ENCODE measurements at regions of chr1 and their contacts with region 1.

Region 1: GRCh38 chr1:234188454-234188792 is 184.8 kb upstream of the COA6 start:
- DNase-seq: peak; percentile 98
- H3K4me3 ChIP-seq: no peak overlapping the region
- H3K27ac ChIP-seq: peak overlapping the region; percentile 75
- H3K4me1 ChIP-seq: peaks cover 38% of the 10 kb centered on the region
- H3K27me3 ChIP-seq: no peaks in the 10 kb centered on the region
- CTCF ChIP-seq: peak; percentile 35 to 48

Region 2: GRCh38 chr1:234125283-234125682 is 63.1 kb before region 1 on chr1:
- CTCF ChIA-PET with region 1: no interaction called
- dilution Hi-C with region 1: no loop called
- in situ Hi-C with region 1: no loop called
- intact Hi-C with region 1: loop called (anchors 2 kb)
- DNase-seq: peak; percentile 55
- H3K4me3 ChIP-seq: no peak overlapping the region
- H3K27ac ChIP-seq: no peak overlapping the region
- H3K4me1 ChIP-seq: peaks cover 7% of the 10 kb centered on the region
- H3K27me3 ChIP-seq: no peaks in the 10 kb centered on the region
- CTCF ChIP-seq: peak; percentile 66 to 79

Region 3: GRCh38 chr1:234154320-234155251 is 33.8 kb before region 1 on chr1:
- CTCF ChIA-PET with region 1: no interaction called
- dilution Hi-C with region 1: no loop called
- in situ Hi-C with region 1: no loop called
- intact Hi-C with region 1: loop called (anchors 1 kb)
- DNase-seq: peak; percentile 73
- H3K4me3 ChIP-seq: no peak overlapping the region
- H3K27ac ChIP-seq: no peak overlapping the region
- H3K4me1 ChIP-seq: peaks cover 3% of the 10 kb centered on the region
- H3K27me3 ChIP-seq: no peaks in the 10 kb centered on the region
- CTCF ChIP-seq: peak; percentile 73 to 80

Region 4: DNA sequence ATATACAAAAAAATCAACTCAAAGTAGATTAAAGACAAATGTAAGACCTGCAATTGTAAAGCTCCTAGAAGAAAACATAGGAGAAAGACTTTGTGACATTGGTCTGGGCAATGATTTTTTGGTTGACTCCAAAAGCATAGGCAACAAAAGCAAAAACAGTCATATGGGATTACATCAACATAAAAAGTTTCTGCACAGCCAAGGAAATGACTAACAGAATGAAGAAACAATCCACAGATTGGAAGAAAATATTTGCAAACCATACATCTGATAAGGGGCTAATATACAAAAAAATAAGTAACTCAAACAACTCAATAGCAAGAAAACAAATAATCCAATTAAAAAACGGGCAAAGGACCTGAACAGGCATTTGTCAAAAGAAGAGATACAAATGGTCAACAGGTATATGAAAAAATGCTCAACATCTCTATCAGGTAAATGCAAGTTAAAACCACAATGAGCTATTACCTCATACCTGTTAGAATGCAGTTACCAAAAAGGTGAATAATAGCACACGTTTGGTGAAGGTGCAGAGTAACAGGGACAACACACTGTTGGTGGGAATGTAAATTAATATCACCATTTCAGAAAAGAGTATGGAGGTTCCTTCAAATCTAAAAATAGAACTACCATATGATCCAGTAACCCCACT is 11.2 kb after region 1 on chr1:
- CTCF ChIA-PET with region 1: interaction called, 4 read pairs
- dilution Hi-C with region 1: no loop called
- in situ Hi-C with region 1: no loop called
- intact Hi-C with region 1: loop called (anchors 1 kb)
- DNase-seq: peak; percentile 76
- H3K4me3 ChIP-seq: no peak overlapping the region
- H3K27ac ChIP-seq: peak overlapping the region; percentile 57
- H3K4me1 ChIP-seq: peaks cover 14% of the 10 kb centered on the region
- H3K27me3 ChIP-seq: no peaks in the 10 kb centered on the region
- CTCF ChIP-seq: no peak

Region 5: GRCh38 chr1:234355782-234356510 is 167.5 kb after region 1 on chr1:
- CTCF ChIA-PET with region 1: no interaction called
- dilution Hi-C with region 1: no loop called
- in situ Hi-C with region 1: no loop called
- intact Hi-C with region 1: no loop called
- DNase-seq: no peak
- H3K4me3 ChIP-seq: peak overlapping the region in 2 of 3 experiments; percentile 41 to 63
- H3K27ac ChIP-seq: no peak overlapping the region
- H3K4me1 ChIP-seq: no peaks in the 10 kb centered on the region
- H3K27me3 ChIP-seq: no peaks in the 10 kb centered on the region
- CTCF ChIP-seq: no peak

Measured in mammary epithelial cell (primary cell).